Psoas muscle (tissue), 8 donors: ENCODE measurements at regions of chr1 and their contacts with region 1.

Region 1: DNA sequence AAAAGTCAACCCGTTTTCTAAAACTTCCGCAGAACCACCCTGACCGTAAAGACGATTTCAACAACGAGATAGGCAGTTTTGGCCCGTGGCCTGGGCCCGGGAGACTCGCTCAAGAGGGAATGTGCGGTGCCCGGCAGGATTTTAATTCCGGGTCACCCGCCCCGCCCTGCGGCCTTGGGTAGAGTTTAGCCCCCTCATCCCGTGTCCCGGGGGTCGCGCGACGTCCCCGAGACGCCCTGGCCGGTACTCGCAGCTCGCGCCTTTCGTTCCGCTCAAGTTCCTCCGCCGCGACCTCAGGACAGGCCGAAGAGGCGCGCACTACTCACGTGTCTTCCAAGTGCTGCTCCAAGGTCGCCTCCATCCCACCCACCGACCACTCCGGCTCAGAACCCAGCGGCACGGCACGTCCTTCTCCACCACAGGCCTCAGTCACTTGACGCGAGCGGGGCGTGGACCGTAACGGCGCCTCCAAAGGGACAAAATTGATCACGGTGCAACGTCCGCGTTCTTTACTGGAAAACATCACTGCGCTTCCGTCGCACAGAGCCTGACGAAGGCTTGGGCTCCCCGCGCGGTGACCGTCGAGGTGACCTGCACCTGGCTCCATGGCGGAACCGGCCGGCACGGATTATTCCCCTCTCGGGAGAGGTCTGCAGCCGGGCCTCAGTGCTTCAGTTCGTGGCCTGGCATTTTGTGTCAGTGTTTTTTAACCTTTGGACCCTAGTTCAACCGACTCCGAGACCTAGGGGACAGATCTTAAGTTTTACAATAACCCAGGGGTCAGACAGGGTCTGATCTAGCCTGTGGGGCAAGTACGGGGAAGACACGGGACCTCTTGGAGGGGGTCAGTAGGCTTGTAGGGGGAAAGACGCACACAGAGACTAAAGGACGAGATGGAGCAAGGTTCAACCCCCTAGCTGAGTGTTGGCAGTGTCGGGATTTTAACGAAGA is at the start of gene LAMTOR5:
- DNase-seq: peak; percentile 95 to 97
- ATAC-seq: peak; percentile 96 to 99 (median 98)
- H3K4me3 ChIP-seq: peak within 1 kb of the TSS; percentile 91
- H3K27ac ChIP-seq: peak within 1 kb of the TSS; percentile 96
- H3K4me1 ChIP-seq: peaks cover 20% of the 10 kb centered on the region
- H3K27me3 ChIP-seq: no peaks in the 10 kb centered on the region
- CTCF ChIP-seq: no peak
- total RNA-seq, gene LAMTOR5: 166 to 250 (median 207) TPM

Region 2: GRCh38 chr1:110338886-110339406 is 68.6 kb before region 1 on chr1 and contains the start of gene RBM15:
- intact Hi-C with region 1: loop called (anchors 2 to 5 kb)
- DNase-seq: peak; percentile 98 to 99
- ATAC-seq: peak; percentile 79 to 86 (median 84)
- H3K4me3 ChIP-seq: peak within 1 kb of the TSS; percentile 93
- H3K27ac ChIP-seq: peak within 1 kb of the TSS; percentile 97
- H3K4me1 ChIP-seq: peaks cover 44% of the 10 kb centered on the region
- H3K27me3 ChIP-seq: no peaks in the 10 kb centered on the region
- CTCF ChIP-seq: no peak
- total RNA-seq, gene RBM15: 18.9 to 32.0 (median 25.0) TPM

Region 3: GRCh38 chr1:110393691-110394564 is 13.6 kb before region 1 on chr1:
- intact Hi-C with region 1: no loop called
- DNase-seq: no peak
- ATAC-seq: no peak
- H3K4me3 ChIP-seq: no peak overlapping the region
- H3K27ac ChIP-seq: no peak overlapping the region
- H3K4me1 ChIP-seq: no peaks in the 10 kb centered on the region
- H3K27me3 ChIP-seq: no peaks in the 10 kb centered on the region
- CTCF ChIP-seq: no peak